A549 (cell line): ENCODE measurements at regions of chr16 and their contacts with region 1.

Region 1: DNA sequence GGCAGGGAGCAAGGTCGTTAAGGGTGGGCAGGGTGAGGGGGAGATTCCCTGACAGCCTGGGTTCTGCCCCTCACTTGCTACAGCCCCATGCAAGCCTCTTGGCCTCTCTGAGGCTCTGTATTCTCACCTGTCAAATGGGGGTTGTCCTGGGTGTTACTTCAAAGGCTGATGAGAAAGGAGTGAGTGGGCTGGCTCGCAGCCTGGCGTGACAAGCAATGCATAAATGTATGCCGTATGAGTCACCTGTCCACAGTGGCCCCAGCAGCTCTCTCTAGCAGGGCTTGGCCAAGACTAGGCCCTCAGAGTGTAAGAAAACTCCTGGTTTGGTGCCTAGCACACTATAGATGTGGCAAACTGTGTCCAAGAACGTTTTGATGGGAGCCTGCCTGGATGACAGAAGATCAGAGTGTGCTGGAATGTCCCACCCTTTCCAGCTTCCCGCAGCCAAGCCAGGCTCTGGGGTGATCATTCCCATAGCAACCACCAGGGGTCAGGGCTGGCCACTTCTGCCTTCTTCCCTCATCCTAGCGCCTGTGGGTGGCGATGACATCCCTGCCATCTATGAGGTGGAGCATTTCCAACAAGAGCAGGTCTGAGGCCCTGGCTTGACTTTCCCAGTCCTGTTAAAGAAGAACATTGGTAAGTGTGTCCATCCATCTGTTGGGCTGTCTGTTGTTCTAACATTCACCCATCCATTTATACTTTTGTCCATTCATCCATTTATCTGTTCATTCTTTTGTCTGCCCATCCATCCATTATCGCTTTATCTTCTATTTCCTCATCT is 37.2 kb upstream of the ADGRG1 start:
- DNase-seq: peak; percentile 82 to 90
- ATAC-seq: peak; percentile 94 to 97
- H3K4me3 ChIP-seq: no peak overlapping the region
- H3K27ac ChIP-seq: peak overlapping the region; percentile 55 to 78
- H3K4me1 ChIP-seq: peaks cover 18% of the 10 kb centered on the region
- CTCF ChIP-seq: peak; percentile 95
- EP300 ChIP-seq: no peak
- POLR2A ChIP-seq: no peak
- RAD21 ChIP-seq: peak; percentile 95 to 96

Region 2: DNA sequence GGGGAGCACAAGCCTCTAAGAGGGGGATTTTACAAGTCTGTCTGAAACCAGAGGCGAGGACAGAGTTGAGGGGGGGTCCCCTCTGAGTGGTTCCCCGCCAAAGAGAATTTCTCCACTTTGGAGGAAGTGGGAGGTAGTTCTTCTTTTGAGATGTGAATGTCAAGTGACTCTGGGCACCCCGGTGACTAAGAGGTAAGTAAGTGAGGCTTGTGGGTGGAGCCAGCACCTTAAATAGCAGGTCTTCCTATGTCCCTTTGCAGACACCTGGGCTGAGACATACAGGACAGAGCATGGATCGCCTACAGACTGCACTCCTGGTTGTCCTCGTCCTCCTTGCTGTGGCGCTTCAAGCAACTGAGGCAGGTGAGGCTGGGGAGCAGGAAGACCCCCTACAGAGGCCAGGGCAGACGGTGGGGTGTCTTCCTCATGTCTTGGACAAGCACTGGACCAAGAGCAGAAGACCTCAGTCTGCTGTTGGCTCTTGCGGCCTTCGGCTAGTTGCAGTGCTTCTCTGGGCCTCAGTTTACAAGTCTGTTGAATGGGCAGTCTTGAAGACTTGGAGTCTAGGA is 232.7 kb before region 1 on chr16 and contains the start of gene CCL22:
- CTCF ChIA-PET with region 1: no interaction called
- POLR2A ChIA-PET with region 1: no interaction called
- DNase-seq: no peak
- ATAC-seq: no peak
- H3K4me3 ChIP-seq: no peak within 1 kb of the TSS
- H3K27ac ChIP-seq: no peak within 1 kb of the TSS
- H3K4me1 ChIP-seq: no peaks in the 10 kb centered on the region
- CTCF ChIP-seq: no peak
- EP300 ChIP-seq: no peak
- POLR2A ChIP-seq: no peak
- RAD21 ChIP-seq: no peak
- polyA plus RNA-seq, gene CCL22: not detected in 2 replicates

Region 3: GRCh38 chr16:57609541-57610401 is 18.5 kb after region 1 on chr16:
- CTCF ChIA-PET with region 1: interaction called, 29 read pairs
- POLR2A ChIA-PET with region 1: interaction called, 3 read pairs
- DNase-seq: no peak
- ATAC-seq: peak in 1 of 2 experiments; percentile 21; a peak in 3 of 6 replicates
- H3K4me3 ChIP-seq: no peak overlapping the region
- H3K27ac ChIP-seq: peak overlapping the region; percentile 69 to 74
- H3K4me1 ChIP-seq: peaks cover 71% of the 10 kb centered on the region
- CTCF ChIP-seq: no peak
- EP300 ChIP-seq: no peak
- POLR2A ChIP-seq: no peak
- RAD21 ChIP-seq: peak in 1 of 2 experiments; percentile 10; a peak in 1 of 5 replicates

Region 4: DNA sequence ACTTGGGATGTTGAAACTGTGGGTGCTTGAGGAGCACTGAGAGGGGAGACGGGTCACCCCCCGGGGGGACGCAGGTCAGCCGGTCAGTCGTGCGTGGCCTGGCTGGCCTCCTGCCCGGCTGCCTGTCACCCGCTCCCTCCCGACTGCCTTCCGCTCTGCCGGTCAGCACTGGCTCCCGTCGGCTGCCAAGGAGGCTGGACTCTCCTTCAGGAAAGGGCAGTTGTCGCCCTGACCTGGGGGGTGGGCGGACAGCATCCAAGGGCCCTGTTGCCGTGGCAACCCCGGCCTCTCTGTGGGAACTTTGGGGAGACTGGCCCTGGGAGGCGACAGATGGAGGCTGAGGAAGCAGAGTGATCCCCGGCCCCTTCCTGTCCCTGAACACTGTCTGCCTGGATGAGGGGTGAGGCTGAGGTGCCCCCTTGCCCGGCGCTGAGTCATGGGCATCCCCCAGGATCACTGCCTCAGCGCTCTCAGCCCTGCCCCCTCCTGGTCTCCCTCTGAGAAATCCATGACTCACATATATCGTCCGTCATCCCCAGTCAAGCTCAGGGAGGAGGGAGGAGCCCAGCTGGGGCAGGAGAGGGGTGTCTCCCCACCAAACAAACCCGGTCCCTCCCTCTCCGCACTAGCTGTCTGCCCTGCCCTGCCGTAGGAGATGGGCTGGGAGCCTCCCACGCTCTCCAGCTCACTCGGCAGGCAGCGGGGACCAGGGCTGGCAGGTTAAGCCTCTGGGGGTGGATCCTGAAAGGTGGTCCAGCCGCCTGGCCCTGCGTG is 36.9 kb after region 1 on chr16 and contains the start of gene ADGRG1:
- CTCF ChIA-PET with region 1: interaction called, 227 read pairs
- POLR2A ChIA-PET with region 1: interaction called, 4 read pairs
- DNase-seq: peak; percentile 93 to 95
- ATAC-seq: peak; percentile 80 to 85
- H3K4me3 ChIP-seq: peak within 1 kb of the TSS; percentile 44
- H3K27ac ChIP-seq: peak within 1 kb of the TSS; percentile 91 to 98
- H3K4me1 ChIP-seq: peaks cover 94% of the 10 kb centered on the region
- CTCF ChIP-seq: no peak; the same call in 2 of the 3 replicates
- EP300 ChIP-seq: peak; percentile 17 to 28; a peak in 2 of 5 replicates
- POLR2A ChIP-seq: peak; percentile 54
- RAD21 ChIP-seq: peak; percentile 11 to 23; a peak in 1 of 5 replicates
- polyA plus RNA-seq, gene ADGRG1: 28.3 and 37.7 TPM in 2 replicates

Region 5: DNA sequence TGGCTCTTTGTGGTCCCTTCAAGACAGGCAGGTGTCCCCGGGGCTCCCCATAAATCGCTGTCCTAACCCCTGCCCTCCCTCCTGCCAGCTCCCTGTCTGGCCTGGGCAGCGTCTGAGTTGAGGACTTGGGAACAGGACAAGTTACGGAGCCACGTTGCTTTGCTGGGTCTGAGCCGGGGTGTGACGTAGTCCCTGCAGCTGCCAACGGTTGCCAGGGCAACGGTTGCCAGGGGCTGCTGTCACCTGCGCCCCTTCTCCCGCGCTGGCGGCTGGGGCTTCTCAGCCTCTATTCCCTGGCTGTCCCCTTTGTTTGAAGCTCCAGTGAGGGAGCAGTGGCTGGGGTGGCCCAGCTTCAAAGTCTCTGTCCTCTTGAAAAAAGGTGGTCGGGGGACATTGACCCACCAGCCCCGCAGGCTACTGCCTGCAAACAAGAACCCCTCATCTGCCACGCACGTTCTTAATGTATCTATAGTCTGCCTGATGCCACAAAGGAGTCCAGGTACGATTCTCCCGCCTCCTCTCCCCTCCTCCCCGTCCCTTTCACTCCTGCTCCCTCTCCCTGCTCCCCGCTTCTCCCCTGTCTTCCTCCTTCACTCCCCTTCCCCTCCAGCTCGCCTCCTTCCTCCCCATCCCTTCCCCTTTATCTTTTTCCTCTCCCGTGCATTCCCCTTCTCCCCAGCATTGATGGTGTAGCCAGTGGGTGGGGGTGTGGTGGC is 48.1 kb after region 1 on chr16:
- CTCF ChIA-PET with region 1: interaction called, 227 read pairs
- POLR2A ChIA-PET with region 1: no interaction called
- DNase-seq: no peak
- ATAC-seq: no peak
- H3K4me3 ChIP-seq: no peak overlapping the region
- H3K27ac ChIP-seq: peak overlapping the region in 1 of 2 experiments; percentile 52; a peak in 2 of 6 replicates
- H3K4me1 ChIP-seq: peaks cover 51% of the 10 kb centered on the region
- CTCF ChIP-seq: no peak
- EP300 ChIP-seq: no peak
- POLR2A ChIP-seq: no peak
- RAD21 ChIP-seq: no peak

Region 6: DNA sequence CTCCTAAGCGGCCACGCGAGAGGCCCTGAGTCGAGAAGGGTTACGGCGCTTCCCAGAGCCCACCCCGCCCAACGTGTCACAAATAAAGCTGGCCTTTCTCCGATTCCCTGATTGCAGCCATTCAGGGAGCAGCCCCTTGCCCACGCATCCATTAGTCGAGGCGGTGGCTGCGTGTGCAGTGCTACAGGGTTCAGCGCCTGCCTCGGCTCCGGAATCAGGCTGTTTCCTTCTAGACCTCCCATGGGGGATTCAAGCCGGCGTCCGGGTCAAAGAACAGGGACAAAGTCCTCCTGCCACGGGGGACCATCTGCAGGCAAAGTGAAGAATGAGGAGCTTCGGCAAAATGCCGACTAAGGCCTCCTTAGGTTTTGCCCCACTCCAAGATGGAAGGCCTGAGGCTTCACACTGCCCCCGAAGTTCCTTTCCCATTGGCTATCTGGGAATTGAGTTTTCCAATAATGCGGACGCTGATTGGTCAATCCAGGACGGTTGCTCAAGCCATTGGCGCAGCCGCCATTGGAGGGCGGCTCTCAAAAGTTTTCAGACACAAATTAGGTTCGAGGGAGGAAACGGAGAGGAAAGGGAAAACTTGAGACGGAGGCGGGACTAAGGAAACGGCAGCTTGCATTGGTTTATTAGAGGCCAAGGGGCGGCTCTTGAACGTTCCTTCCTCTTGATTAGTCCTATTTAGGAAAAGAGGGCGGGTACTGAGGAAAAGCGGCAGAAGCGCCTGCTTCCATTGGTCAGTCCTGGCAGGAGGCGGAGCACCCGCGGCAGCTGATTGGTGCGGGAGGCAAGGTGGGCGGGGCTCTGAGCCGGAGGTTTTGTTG is 143.9 kb after region 1 on chr16:
- CTCF ChIA-PET with region 1: interaction called, 20 read pairs
- POLR2A ChIA-PET with region 1: interaction called, 5 read pairs
- DNase-seq: peak; percentile 99 to 100
- ATAC-seq: peak; percentile 88 to 95
- H3K4me3 ChIP-seq: peak overlapping the region; percentile 72
- H3K27ac ChIP-seq: peak overlapping the region; percentile 92 to 93
- H3K4me1 ChIP-seq: peaks cover 12% of the 10 kb centered on the region
- CTCF ChIP-seq: no peak
- EP300 ChIP-seq: no peak
- POLR2A ChIP-seq: 0 out of 2 replicates have a peak, but pooled peaks have one; percentile 8
- RAD21 ChIP-seq: no peak

Region 7: DNA sequence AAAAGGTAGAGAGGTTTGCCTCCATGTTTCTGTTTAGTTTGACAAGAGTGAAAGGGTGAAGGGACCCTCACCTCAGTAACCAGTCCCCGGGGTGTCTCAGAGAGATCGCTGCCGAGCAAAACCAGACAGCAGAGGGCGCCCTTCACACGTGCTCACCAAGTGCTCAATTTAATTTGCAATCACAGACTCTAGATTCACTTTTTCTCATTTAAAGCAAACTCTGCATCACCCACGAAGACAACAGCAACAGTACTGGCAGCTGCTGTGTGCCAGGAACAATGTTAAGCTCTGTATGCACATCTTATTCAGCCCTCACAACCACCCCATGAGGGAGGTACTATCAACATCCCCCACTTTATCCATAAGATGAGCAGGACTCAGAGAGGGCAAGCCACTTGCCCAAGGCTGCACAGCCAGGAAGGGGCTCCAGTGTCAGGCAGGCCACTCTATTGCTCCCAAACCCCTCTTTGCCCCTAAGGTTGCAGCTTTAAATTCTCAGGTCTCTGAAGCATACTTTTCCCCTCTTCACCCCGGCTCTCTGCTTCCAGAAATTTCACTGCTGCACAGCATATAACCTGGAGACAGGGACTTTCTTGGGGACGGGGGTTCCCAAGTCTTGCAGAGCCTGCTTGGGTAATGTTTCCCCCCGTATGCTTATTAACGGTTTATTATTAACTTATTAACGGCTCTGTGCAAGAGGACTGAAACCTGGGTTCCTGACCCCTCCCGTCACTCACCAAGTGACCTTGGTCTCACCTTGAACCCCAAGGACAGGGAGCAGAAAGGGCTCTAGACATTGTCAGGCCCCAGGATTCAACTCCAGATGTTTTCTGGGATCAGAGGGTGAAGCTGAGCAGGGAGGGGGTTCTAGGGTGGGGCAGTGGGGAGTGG is 308.7 kb after region 1 on chr16:
- CTCF ChIA-PET with region 1: no interaction called
- POLR2A ChIA-PET with region 1: no interaction called
- DNase-seq: peak; percentile 66 to 74
- ATAC-seq: peak; percentile 81 to 82
- H3K4me3 ChIP-seq: no peak overlapping the region
- H3K27ac ChIP-seq: peak overlapping the region; percentile 53 to 94
- H3K4me1 ChIP-seq: peaks cover 39% of the 10 kb centered on the region
- CTCF ChIP-seq: peak; percentile 97
- EP300 ChIP-seq: no peak
- POLR2A ChIP-seq: no peak
- RAD21 ChIP-seq: peak; percentile 93